ENCODE measurements at regions of chr7 and their contacts with region 1.

Region 1: DNA sequence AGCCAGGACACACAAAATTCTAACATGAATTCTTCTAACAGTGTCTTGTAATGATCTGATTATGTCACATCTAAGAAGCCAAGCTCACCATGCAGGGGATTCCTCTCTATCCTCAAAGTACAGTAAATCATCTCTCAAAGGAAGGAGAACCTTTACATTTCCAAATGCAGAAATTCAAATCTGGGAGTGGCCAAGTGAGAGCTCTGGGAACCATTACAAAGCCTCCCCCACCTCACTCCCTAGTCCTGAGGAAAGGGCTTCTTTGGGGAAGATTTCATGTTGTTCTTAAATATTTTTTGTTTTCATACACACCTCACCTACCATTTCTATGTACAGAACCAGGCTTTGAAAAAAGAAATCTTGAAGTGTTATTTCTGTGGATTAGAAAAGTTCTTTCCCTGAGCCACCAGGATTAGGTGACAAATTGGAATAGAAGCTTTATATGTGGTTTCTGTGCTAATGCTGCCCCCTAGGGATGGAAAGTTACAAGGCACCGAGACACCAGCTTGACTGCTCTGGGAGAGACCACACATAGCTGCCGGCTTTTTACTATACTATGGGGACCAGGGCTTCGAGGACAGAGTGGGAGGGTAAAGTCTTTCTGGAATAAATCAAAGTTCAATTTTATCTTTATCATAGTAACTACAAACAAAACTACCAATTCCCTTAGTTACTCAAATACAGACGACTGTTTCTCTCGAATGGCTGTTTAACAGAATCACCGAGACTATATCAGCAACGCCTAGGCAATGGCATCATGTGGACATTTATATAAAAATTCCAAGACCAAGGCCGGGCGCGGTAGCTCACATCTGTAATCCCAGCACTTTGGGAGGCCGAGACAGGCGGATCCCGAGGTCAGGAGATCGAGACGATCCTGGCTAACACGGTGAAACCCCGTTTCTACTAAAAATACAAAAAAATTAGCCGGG is 116.1 kb downstream of the RNF216 start:
- DNase-seq: peak; percentile 77
- ATAC-seq: peak; percentile 80
- H3K4me3 Mint-ChIP-seq: no peak overlapping the region
- H3K27ac Mint-ChIP-seq: peak overlapping the region; percentile 20
- H3K4me1 Mint-ChIP-seq: peaks cover 31% of the 10 kb centered on the region
- H3K27me3 Mint-ChIP-seq: no peaks in the 10 kb centered on the region
- CTCF ChIP-seq: peak; percentile 81

Region 2: GRCh38 chr7:5629941-5630340 is 35.4 kb before region 1 on chr7:
- CTCF ChIA-PET with region 1: interaction called, 23 read pairs
- POLR2A ChIA-PET with region 1: interaction called, 3 read pairs
- intact Hi-C with region 1: no loop called
- DNase-seq: peak; percentile 82
- ATAC-seq: peak; percentile 73
- H3K4me3 Mint-ChIP-seq: no peak overlapping the region
- H3K27ac Mint-ChIP-seq: peak overlapping the region; percentile 21
- H3K4me1 Mint-ChIP-seq: peaks cover 38% of the 10 kb centered on the region
- H3K27me3 Mint-ChIP-seq: no peaks in the 10 kb centered on the region
- CTCF ChIP-seq: no peak

Region 3: DNA sequence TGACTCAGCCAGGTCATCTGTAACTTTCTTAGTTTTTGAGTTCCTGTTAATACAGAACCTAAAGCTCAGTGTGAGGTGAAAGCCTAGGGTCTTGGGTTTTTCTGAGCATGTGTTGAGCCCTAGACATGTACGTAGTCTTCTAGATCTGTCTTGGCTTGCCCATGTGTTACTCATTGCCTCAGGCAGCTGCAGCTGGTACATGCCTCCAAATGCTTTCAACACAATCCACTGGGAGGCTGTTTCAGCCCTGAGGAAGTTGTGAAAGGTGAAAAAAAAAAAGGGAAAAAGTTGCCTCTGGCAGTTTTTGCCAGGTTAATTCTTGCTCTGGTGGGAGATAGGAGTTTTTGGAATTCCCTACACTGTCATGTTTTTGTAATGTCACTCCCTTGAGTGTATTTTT is 18.5 kb before region 1 on chr7:
- CTCF ChIA-PET with region 1: interaction called, 14 read pairs
- POLR2A ChIA-PET with region 1: no interaction called
- intact Hi-C with region 1: no loop called
- DNase-seq: no peak
- ATAC-seq: no peak
- H3K4me3 Mint-ChIP-seq: no peak overlapping the region
- H3K27ac Mint-ChIP-seq: no peak overlapping the region
- H3K4me1 Mint-ChIP-seq: peaks cover 26% of the 10 kb centered on the region
- H3K27me3 Mint-ChIP-seq: no peaks in the 10 kb centered on the region
- CTCF ChIP-seq: no peak

Region 4: DNA sequence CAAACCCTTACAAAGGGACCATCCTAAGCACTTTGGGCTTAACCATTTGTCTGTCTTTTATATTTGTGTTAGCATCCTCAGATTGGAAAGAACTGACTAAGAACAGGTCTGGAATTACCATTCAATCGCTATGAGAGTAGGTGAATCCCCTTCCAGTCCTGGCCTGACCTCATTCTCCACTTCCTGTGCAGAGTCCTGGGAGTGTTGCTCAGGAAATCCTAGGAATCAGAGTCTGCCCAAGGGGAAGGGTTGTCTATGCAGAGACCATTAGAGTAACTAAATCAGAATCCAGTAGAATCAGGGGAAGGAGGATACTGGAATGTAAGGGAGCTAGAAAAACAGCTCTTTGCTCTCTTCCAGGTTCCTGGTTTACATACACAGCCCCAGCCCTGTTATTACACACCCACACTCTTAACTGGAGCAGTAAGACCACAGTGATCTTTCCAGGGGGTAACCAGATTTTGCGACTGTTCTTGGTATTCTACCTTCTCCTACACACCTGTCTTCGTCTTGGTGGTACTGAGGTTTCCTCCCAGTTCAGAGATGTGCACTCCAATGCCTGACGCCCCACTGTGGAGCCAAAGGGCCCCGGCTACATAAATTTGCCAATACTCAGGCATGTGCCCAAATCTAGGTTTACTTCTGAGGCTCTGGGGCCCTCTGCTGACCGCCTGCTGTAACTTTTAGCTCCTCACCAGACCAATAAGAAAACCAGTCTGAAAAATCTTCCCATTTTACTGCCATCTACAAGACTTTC is 12.4 kb after region 1 on chr7:
- CTCF ChIA-PET with region 1: interaction called, 51 read pairs
- POLR2A ChIA-PET with region 1: interaction called, 3 read pairs
- intact Hi-C with region 1: no loop called
- DNase-seq: peak; percentile 70
- ATAC-seq: peak; percentile 52
- H3K4me3 Mint-ChIP-seq: no peak overlapping the region
- H3K27ac Mint-ChIP-seq: peak overlapping the region; percentile 53
- H3K4me1 Mint-ChIP-seq: peaks cover 55% of the 10 kb centered on the region
- H3K27me3 Mint-ChIP-seq: no peaks in the 10 kb centered on the region
- CTCF ChIP-seq: peak; percentile 47

Region 5: GRCh38 chr7:5694912-5695726 is 29.8 kb after region 1 on chr7:
- CTCF ChIA-PET with region 1: interaction called, 16 read pairs
- POLR2A ChIA-PET with region 1: interaction called, 6 read pairs
- intact Hi-C with region 1: loop called (anchors 5 kb)
- DNase-seq: peak; percentile 87
- ATAC-seq: peak; percentile 75
- H3K4me3 Mint-ChIP-seq: peak overlapping the region; percentile 86
- H3K27ac Mint-ChIP-seq: peak overlapping the region; percentile 95
- H3K4me1 Mint-ChIP-seq: peaks cover 98% of the 10 kb centered on the region
- H3K27me3 Mint-ChIP-seq: no peaks in the 10 kb centered on the region
- CTCF ChIP-seq: no peak

Region 6: GRCh38 chr7:5795752-5796475 is 130.6 kb after region 1 on chr7:
- CTCF ChIA-PET with region 1: no interaction called
- POLR2A ChIA-PET with region 1: no interaction called
- intact Hi-C with region 1: no loop called
- DNase-seq: no peak
- ATAC-seq: no peak
- H3K4me3 Mint-ChIP-seq: no peak overlapping the region
- H3K27ac Mint-ChIP-seq: no peak overlapping the region
- H3K4me1 Mint-ChIP-seq: peaks cover 3% of the 10 kb centered on the region
- H3K27me3 Mint-ChIP-seq: no peaks in the 10 kb centered on the region
- CTCF ChIP-seq: no peak

Measured in activated CD8-positive, alpha-beta T cell treated with anti-CD3 and anti-CD28 coated beads for 36 hours (primary cell).